Activated naive CD4-positive, alpha-beta T cell treated with anti-CD3 and anti-CD28 coated beads for 36 hours (primary cell): ENCODE measurements at regions of chr2 and their contacts with region 1.

Region 1: GRCh38 chr2:43169987-43170386 is 56.4 kb downstream of the ZFP36L2 start:
- DNase-seq: peak; percentile 89
- H3K4me3 Mint-ChIP-seq: peak overlapping the region; percentile 42
- H3K27ac Mint-ChIP-seq: peak overlapping the region; percentile 61
- H3K4me1 Mint-ChIP-seq: peaks cover 81% of the 10 kb centered on the region
- H3K27me3 Mint-ChIP-seq: no peaks in the 10 kb centered on the region

Region 2: GRCh38 chr2:42590176-42590575 is 579.8 kb before region 1 on chr2:
- CTCF ChIA-PET with region 1: no interaction called
- intact Hi-C with region 1: no loop called
- DNase-seq: no peak
- H3K4me3 Mint-ChIP-seq: no peak overlapping the region
- H3K27ac Mint-ChIP-seq: no peak overlapping the region
- H3K4me1 Mint-ChIP-seq: peaks cover 13% of the 10 kb centered on the region
- H3K27me3 Mint-ChIP-seq: no peaks in the 10 kb centered on the region

Region 3: DNA sequence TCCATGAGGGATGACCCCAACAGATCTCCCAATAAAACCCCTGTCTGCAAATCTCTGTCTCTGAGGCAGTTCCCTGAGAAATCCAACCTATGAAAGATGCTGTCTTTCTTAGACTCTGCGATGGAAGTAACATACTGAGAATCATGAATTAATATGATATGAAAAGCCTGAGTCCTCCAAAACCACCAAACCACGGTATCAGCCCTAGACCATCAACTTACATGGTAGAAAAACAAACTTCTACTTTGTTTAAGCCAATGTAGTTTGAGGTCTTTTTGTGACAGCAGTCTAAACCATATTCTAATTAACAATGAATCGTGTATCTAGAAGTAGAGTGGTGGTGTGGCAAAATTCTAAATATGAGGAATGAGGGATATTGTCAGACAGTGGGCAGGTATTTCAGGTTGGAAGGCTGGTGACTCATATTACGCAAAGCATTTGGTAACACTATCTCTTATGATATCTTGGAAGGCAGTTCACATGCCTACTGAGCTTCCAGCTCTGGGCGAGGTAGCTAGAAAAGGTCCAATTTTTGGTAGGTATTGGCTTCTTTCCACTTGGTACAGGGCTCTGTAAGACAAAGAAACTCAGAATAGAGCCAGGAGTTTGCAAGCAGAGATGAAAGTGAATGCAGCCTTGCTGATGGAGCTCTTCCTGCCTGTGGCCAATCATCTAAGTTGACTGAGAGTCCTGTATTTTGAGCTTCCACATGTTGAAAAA is 159.4 kb before region 1 on chr2:
- CTCF ChIA-PET with region 1: no interaction called
- intact Hi-C with region 1: no loop called
- DNase-seq: no peak
- H3K4me3 Mint-ChIP-seq: no peak overlapping the region
- H3K27ac Mint-ChIP-seq: no peak overlapping the region
- H3K4me1 Mint-ChIP-seq: peaks cover 11% of the 10 kb centered on the region
- H3K27me3 Mint-ChIP-seq: no peaks in the 10 kb centered on the region

Region 4: GRCh38 chr2:43149482-43150107 is 20.4 kb before region 1 on chr2:
- CTCF ChIA-PET with region 1: interaction called, 12 read pairs
- intact Hi-C with region 1: loop called (anchors 1 kb)
- DNase-seq: peak; percentile 90
- H3K4me3 Mint-ChIP-seq: peak overlapping the region; percentile 26
- H3K27ac Mint-ChIP-seq: peak overlapping the region; percentile 62
- H3K4me1 Mint-ChIP-seq: peaks cover 70% of the 10 kb centered on the region
- H3K27me3 Mint-ChIP-seq: no peaks in the 10 kb centered on the region

Region 5: GRCh38 chr2:43158259-43158880 is 11.6 kb before region 1 on chr2:
- CTCF ChIA-PET with region 1: interaction called, 10 read pairs
- intact Hi-C with region 1: loop called (anchors 1 kb)
- DNase-seq: peak; percentile 79
- H3K4me3 Mint-ChIP-seq: peak overlapping the region; percentile 77
- H3K27ac Mint-ChIP-seq: peak overlapping the region; percentile 99
- H3K4me1 Mint-ChIP-seq: peaks cover 72% of the 10 kb centered on the region
- H3K27me3 Mint-ChIP-seq: no peaks in the 10 kb centered on the region

Region 6: GRCh38 chr2:43194121-43194869 is 24.3 kb after region 1 on chr2:
- CTCF ChIA-PET with region 1: interaction called, 17 read pairs
- intact Hi-C with region 1: loop called (anchors 1 kb)
- DNase-seq: no peak
- H3K4me3 Mint-ChIP-seq: peak overlapping the region; percentile 79
- H3K27ac Mint-ChIP-seq: peak overlapping the region; percentile 93
- H3K4me1 Mint-ChIP-seq: peaks cover 57% of the 10 kb centered on the region
- H3K27me3 Mint-ChIP-seq: no peaks in the 10 kb centered on the region

Region 7: DNA sequence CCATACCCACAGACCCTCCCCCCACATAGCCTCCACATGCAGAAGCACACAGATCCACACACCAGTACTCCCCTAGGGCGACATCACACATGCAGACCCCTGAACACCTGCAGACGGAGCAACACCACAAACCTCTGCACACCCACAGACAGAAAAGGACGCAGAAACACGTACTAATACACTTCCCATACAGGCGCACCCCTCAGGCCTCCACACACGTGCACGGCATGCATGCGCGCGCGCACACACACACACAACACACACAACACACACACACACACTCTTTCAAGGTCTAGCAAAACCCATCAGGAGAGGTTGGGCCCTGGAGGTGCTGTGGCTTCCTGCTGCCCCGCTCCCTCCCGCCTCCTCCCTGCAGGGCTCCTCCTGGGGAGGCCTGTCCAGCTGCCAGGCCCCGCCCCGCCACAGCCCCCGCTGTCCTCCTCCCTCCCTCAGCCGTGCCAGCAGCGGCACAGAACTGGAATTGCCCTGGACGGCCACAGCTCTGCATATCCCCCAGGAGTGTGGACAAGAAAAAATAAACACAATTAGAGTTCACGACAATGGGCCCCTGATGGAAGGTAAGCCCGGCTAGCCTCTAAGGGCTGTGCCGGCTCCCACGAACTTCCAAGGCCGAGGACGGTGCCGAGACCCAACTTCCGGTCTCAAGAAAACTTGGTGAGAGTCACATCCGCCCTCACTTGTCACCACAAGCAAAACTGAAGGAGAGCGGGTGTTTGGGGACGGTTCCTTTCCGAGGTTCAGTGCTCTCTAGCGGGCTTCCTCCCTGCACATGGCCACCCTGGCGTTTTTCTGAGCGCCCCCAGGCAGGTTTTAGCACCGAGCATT is 49.6 kb after region 1 on chr2:
- CTCF ChIA-PET with region 1: interaction called, 128 read pairs
- intact Hi-C with region 1: loop called (anchors 1 kb)
- DNase-seq: peak; percentile 89
- H3K4me3 Mint-ChIP-seq: peak overlapping the region; percentile 93
- H3K27ac Mint-ChIP-seq: peak overlapping the region; percentile 98
- H3K4me1 Mint-ChIP-seq: peaks cover 49% of the 10 kb centered on the region
- H3K27me3 Mint-ChIP-seq: no peaks in the 10 kb centered on the region

Region 8: GRCh38 chr2:43293744-43294695 is 124.0 kb after region 1 on chr2:
- CTCF ChIA-PET with region 1: no interaction called
- intact Hi-C with region 1: loop called (anchors 5 kb)
- DNase-seq: peak; percentile 77
- H3K4me3 Mint-ChIP-seq: no peak overlapping the region
- H3K27ac Mint-ChIP-seq: peak overlapping the region; percentile 81
- H3K4me1 Mint-ChIP-seq: peaks cover 29% of the 10 kb centered on the region
- H3K27me3 Mint-ChIP-seq: no peaks in the 10 kb centered on the region